Activated CD8-positive, alpha-beta T cell treated with anti-CD3 and anti-CD28 coated beads for 36 hours (primary cell): ENCODE measurements at regions of chr9 and their contacts with region 1.

Region 1: GRCh38 chr9:75088260-75088905 is at the start of gene OSTF1:
- DNase-seq: peak; percentile 94
- ATAC-seq: peak; percentile 86
- H3K4me3 Mint-ChIP-seq: peak within 1 kb of the TSS; percentile 94
- H3K27ac Mint-ChIP-seq: peak within 1 kb of the TSS; percentile 97
- H3K4me1 Mint-ChIP-seq: peaks cover 61% of the 10 kb centered on the region
- H3K27me3 Mint-ChIP-seq: no peaks in the 10 kb centered on the region
- CTCF ChIP-seq: no peak
- total RNA-seq, gene OSTF1: 52.2 to 55.3 TPM

Region 2: GRCh38 chr9:75027187-75028107 is 60.9 kb before region 1 on chr9:
- CTCF ChIA-PET with region 1: interaction called, 9 read pairs
- POLR2A ChIA-PET with region 1: interaction called, 12 read pairs
- intact Hi-C with region 1: loop called (anchors 2 kb)
- DNase-seq: peak; percentile 66
- ATAC-seq: peak; percentile 29
- H3K4me3 Mint-ChIP-seq: peak overlapping the region; percentile 99
- H3K27ac Mint-ChIP-seq: peak overlapping the region; percentile 97
- H3K4me1 Mint-ChIP-seq: peaks cover 36% of the 10 kb centered on the region
- H3K27me3 Mint-ChIP-seq: no peaks in the 10 kb centered on the region
- CTCF ChIP-seq: peak; percentile 15

Region 3: GRCh38 chr9:75105841-75106240 is 17.5 kb after region 1 on chr9:
- CTCF ChIA-PET with region 1: interaction called, 6 read pairs
- POLR2A ChIA-PET with region 1: interaction called, 10 read pairs
- intact Hi-C with region 1: no loop called
- DNase-seq: no peak
- ATAC-seq: no peak
- H3K4me3 Mint-ChIP-seq: no peak overlapping the region
- H3K27ac Mint-ChIP-seq: peak overlapping the region; percentile 76
- H3K4me1 Mint-ChIP-seq: peaks cover 56% of the 10 kb centered on the region
- H3K27me3 Mint-ChIP-seq: no peaks in the 10 kb centered on the region
- CTCF ChIP-seq: no peak